ENCODE measurements at regions of chr18 and their contacts with region 1.

Region 1: DNA sequence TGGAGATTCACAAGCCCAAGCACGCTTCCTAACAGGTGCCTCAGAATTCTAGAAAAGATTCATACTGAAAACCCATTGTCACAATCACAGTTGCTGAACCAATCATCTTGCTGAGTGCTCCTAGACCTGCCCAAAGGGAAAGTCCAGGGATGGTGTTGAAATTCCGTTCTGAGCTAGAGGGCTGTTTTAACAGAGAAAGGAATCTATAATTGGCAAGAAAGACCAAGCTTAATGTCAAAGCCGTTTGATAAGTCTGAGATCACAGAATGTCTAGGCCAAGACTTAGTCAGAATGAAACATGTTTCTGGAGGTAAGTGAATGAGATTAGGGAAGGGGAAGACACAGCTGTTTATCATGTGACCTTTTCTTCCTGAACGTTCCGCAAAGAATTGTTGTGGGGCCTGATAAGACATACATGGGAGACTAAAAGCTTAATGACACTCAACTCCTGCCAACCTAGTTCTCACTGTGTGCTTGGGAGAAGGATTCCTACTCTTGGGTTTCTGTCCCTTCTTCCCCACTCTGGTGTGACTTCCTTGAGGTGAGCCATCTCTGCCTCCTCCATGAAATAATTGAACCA is 27.5 kb downstream of the PMAIP1 start:
- DNase-seq: peak; percentile 70
- ATAC-seq: peak; percentile 90
- H3K4me3 Mint-ChIP-seq: peak overlapping the region; percentile 47
- H3K27ac Mint-ChIP-seq: peak overlapping the region; percentile 93
- H3K4me1 Mint-ChIP-seq: peaks cover 37% of the 10 kb centered on the region
- H3K27me3 Mint-ChIP-seq: no peaks in the 10 kb centered on the region

Region 2: GRCh38 chr18:59885579-59886163 is 41.7 kb before region 1 on chr18:
- CTCF ChIA-PET with region 1: interaction called, 6 read pairs
- POLR2A ChIA-PET with region 1: no interaction called
- intact Hi-C with region 1: loop called in 1 of 2 experiments (anchors 1 kb)
- DNase-seq: peak; percentile 56
- ATAC-seq: peak; percentile 79
- H3K4me3 Mint-ChIP-seq: peak overlapping the region; percentile 26
- H3K27ac Mint-ChIP-seq: peak overlapping the region; percentile 74
- H3K4me1 Mint-ChIP-seq: peaks cover 39% of the 10 kb centered on the region
- H3K27me3 Mint-ChIP-seq: no peaks in the 10 kb centered on the region

Region 3: DNA sequence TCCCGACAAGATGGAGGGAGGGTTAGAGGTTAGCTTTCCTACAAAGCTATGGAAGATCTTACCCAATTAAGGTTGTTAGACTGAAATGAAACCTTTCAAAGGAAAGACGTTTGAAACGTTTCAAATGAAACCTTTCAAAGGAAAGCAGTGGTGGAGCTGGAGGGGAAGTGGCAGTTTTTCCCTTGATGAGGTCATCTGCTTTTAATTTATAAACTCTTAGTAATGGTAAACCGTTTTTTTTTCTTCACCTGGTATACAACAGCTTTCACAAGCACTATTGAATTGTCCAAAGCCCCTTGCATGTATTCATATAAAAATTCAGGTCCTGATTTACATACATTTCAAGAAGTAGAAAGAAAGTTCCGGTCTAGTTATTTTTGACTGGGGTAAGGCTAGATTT is 20.2 kb before region 1 on chr18:
- CTCF ChIA-PET with region 1: interaction called, 5 read pairs
- POLR2A ChIA-PET with region 1: interaction called, 17 read pairs
- intact Hi-C with region 1: loop called (anchors 1 kb)
- DNase-seq: no peak
- ATAC-seq: peak; percentile 5
- H3K4me3 Mint-ChIP-seq: peak overlapping the region; percentile 5
- H3K27ac Mint-ChIP-seq: peak overlapping the region; percentile 51
- H3K4me1 Mint-ChIP-seq: peaks cover 76% of the 10 kb centered on the region
- H3K27me3 Mint-ChIP-seq: no peaks in the 10 kb centered on the region

Region 4: GRCh38 chr18:59950215-59950944 is 23.0 kb after region 1 on chr18:
- CTCF ChIA-PET with region 1: interaction called, 4 read pairs
- POLR2A ChIA-PET with region 1: interaction called, 10 read pairs
- intact Hi-C with region 1: loop called (anchors 1 kb)
- DNase-seq: peak; percentile 18
- ATAC-seq: peak; percentile 61
- H3K4me3 Mint-ChIP-seq: no peak overlapping the region
- H3K27ac Mint-ChIP-seq: no peak overlapping the region
- H3K4me1 Mint-ChIP-seq: peaks cover 38% of the 10 kb centered on the region
- H3K27me3 Mint-ChIP-seq: peaks cover 2% of the 10 kb centered on the region

Region 5: GRCh38 chr18:60506682-60507081 is 579.3 kb after region 1 on chr18:
- CTCF ChIA-PET with region 1: no interaction called
- POLR2A ChIA-PET with region 1: no interaction called
- intact Hi-C with region 1: no loop called
- DNase-seq: no peak
- ATAC-seq: no peak
- H3K4me3 Mint-ChIP-seq: no peak overlapping the region
- H3K27ac Mint-ChIP-seq: no peak overlapping the region
- H3K4me1 Mint-ChIP-seq: no peaks in the 10 kb centered on the region
- H3K27me3 Mint-ChIP-seq: no peaks in the 10 kb centered on the region

Region 6: DNA sequence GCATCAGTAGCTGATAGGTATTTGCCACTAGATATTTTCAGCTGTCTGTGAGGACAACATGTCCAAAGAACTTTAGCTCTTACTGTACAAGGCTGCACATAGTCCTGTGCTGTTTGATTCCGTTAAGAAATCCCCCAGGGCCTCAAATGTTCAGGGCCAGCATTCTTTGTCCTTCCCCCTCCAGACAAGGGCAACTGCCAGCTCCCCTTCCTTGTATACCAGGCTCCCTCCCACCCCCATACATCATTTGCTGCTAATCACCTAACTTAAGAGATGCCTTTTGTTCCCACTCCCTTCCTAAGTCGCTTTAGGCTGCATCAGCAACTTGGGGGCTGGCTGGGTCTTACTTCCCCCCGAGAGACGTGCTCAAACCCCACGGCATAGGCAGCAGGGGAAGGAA is 1544.6 kb after region 1 on chr18:
- CTCF ChIA-PET with region 1: no interaction called
- POLR2A ChIA-PET with region 1: no interaction called
- intact Hi-C with region 1: no loop called
- DNase-seq: no peak
- ATAC-seq: no peak
- H3K4me3 Mint-ChIP-seq: no peak overlapping the region
- H3K27ac Mint-ChIP-seq: no peak overlapping the region
- H3K4me1 Mint-ChIP-seq: no peaks in the 10 kb centered on the region
- H3K27me3 Mint-ChIP-seq: peaks cover 3% of the 10 kb centered on the region